ENCODE measurements at regions of chr18 and their contacts with region 1.

Region 1: DNA sequence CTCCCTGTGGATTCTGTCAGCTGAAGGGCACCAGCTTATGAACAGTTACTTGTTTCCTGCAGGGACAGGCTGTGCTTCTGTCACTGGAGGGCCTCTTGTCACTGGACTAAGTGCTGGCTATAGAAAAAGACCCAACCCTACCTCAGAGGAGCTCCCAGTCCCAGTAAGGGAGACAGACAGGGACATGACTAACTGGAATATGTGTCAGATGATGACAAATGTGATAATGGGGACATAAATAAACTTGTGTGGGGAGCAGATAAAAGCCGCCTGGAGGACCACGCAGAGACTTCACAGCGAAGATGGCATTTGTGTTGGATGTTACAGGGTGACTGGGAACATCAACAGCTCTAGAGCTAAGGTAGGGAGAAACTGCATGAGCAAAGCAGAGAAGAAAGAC is 95.0 kb downstream of the MAPRE2 start:
- DNase-seq: no peak
- H3K4me3 ChIP-seq: no peak overlapping the region
- H3K27ac ChIP-seq: no peak overlapping the region; a peak in 1 of 4 replicates
- H3K4me1 ChIP-seq: peaks cover 0 to 11% of the 10 kb centered on the region in 2 experiments; a peak in 1 of 4 replicates
- H3K27me3 ChIP-seq: no peaks in the 10 kb centered on the region
- CTCF ChIP-seq: no peak
- EP300 ChIP-seq: no peak
- RAD21 ChIP-seq: no peak

Region 2: GRCh38 chr18:35122586-35123224 is 13.5 kb before region 1 on chr18:
- CTCF ChIA-PET with region 1: interaction called, 36 read pairs
- POLR2A ChIA-PET with region 1: interaction called, 3 read pairs
- DNase-seq: peak; percentile 65
- H3K4me3 ChIP-seq: no peak overlapping the region; a peak in 1 of 4 replicates
- H3K27ac ChIP-seq: peak overlapping the region in 1 of 2 experiments; percentile 74; a peak in 2 of 4 replicates
- H3K4me1 ChIP-seq: peaks cover 4 to 27% of the 10 kb centered on the region in 2 experiments; a peak in 3 of 4 replicates
- H3K27me3 ChIP-seq: no peaks in the 10 kb centered on the region
- CTCF ChIP-seq: peak; percentile 35
- EP300 ChIP-seq: no peak
- RAD21 ChIP-seq: no peak; the same call in 1 of the 2 replicates

Region 3: DNA sequence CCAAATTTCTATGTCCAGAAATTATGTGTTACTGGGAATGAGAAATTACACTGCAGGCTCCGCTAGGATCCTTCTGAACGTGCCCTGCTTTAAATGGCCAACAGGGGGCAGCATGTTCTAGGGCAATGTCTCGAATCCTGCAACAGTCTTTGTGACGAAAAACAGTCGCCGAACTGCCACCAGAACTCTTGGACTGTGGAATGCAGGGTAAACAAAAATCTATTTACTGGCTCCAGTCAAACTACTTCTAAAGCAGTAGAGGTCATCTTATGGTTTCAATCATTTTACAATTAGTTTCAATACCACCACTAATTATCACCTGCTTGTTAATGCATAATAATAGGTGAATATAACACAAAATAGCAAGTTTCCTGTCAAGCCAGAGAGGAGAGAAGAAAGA is 94.8 kb after region 1 on chr18:
- CTCF ChIA-PET with region 1: no interaction called
- POLR2A ChIA-PET with region 1: no interaction called
- DNase-seq: peak; percentile 71
- H3K4me3 ChIP-seq: peak overlapping the region; percentile 32 to 42; a peak in 3 of 4 replicates
- H3K27ac ChIP-seq: no peak overlapping the region; a peak in 1 of 4 replicates
- H3K4me1 ChIP-seq: no peaks in the 10 kb centered on the region; a peak in 1 of 4 replicates
- H3K27me3 ChIP-seq: no peaks in the 10 kb centered on the region
- CTCF ChIP-seq: peak; percentile 92
- EP300 ChIP-seq: no peak; a peak in 1 of 4 replicates
- RAD21 ChIP-seq: peak; percentile 92